ENCODE measurements at regions of chr9 and their contacts with region 1.

Region 1: DNA sequence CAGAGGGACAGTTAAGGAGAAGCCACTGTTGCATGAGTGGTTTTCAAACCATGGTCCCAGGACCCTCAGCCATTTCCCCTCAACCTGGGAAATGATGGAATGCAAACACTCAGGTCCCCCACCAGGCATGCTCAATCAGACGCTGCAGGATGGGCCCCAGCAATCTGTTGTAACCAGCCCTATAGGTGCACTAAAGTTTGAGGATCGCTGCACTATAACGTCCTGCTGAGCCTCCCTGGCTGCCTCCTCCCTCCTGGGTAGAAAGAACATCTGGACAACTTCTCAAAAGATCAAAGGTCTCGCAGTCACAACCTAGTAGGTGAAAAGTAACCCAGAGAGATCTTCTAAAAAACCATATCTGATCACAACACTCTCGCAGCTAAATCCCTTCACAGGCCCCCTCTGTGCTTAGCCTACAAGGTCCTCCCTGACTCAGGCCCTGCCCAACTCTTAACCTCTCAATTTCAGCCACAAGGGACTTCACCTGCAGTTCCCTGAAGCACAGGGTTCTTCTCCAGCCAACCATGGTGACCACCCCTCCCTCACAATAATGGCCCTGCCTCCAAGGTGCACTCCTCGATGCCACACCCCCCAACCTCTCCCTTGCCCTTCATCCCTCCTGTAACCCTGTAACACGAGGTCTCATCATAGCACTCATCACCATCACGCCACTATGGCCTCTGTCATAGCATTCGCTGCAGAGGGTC is 3.5 kb downstream of the SHB start:
- DNase-seq: no peak
- H3K4me3 ChIP-seq: peak overlapping the region; percentile 96 to 98
- H3K27ac ChIP-seq: peak overlapping the region; percentile 94 to 98
- H3K4me1 ChIP-seq: peaks cover 0 to 74% (median 55%) of the 10 kb centered on the region in 4 donors
- H3K27me3 ChIP-seq: no peaks in the 10 kb centered on the region
- CTCF ChIP-seq: no peak

Region 2: GRCh38 chr9:38023010-38023409 is 42.5 kb before region 1 on chr9:
- intact Hi-C with region 1: loop called (anchors 2 kb)
- DNase-seq: no peak
- H3K4me3 ChIP-seq: no peak overlapping the region
- H3K27ac ChIP-seq: peak overlapping the region in 1 of 2 donors; percentile 83
- H3K4me1 ChIP-seq: peaks cover 10 to 90% (median 83%) of the 10 kb centered on the region in 4 donors
- H3K27me3 ChIP-seq: no peaks in the 10 kb centered on the region
- CTCF ChIP-seq: no peak

Region 3: DNA sequence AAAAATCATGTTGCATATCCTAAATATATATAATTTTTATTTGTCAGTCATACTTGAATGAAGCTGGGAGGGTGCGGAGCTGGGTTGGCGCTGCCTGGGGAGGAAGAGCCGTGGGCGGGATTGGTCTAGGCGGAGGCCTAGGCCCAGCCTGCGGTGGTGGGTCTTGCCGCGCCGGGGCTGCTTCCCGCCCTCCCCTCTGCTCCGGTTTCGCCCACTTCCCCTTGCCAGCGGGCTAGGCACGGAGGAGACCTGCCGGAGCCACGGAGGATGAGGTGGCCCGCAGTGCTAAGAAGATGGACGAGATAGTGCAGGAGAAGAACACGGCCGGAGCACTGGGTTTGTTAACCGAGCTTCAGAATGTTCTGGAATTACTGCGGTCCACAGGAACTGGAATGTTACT is 412.7 kb after region 1 on chr9:
- intact Hi-C with region 1: no loop called
- DNase-seq: no peak
- H3K4me3 ChIP-seq: no peak overlapping the region
- H3K27ac ChIP-seq: no peak overlapping the region
- H3K4me1 ChIP-seq: no peaks in the 10 kb centered on the region
- H3K27me3 ChIP-seq: no peaks in the 10 kb centered on the region
- CTCF ChIP-seq: no peak